ENCODE measurements at regions of chr12 and their contacts with region 1.

Region 1: GRCh38 chr12:13941258-13942249 is 39.8 kb downstream of the GRIN2B start:
- DNase-seq: no peak
- ATAC-seq: no peak

Region 2: GRCh38 chr12:13744561-13744960 is 197.0 kb before region 1 on chr12:
- intact Hi-C with region 1: loop called (anchors 2 kb)
- DNase-seq: no peak
- ATAC-seq: no peak

Measured in Right ventricle myocardium inferior (tissue), 1 donor.